Activated CD4-positive, alpha-beta T cell treated with anti-CD3 and anti-CD28 coated beads for 36 hours (primary cell): ENCODE measurements at regions of chr4 and their contacts with region 1.

Region 1: DNA sequence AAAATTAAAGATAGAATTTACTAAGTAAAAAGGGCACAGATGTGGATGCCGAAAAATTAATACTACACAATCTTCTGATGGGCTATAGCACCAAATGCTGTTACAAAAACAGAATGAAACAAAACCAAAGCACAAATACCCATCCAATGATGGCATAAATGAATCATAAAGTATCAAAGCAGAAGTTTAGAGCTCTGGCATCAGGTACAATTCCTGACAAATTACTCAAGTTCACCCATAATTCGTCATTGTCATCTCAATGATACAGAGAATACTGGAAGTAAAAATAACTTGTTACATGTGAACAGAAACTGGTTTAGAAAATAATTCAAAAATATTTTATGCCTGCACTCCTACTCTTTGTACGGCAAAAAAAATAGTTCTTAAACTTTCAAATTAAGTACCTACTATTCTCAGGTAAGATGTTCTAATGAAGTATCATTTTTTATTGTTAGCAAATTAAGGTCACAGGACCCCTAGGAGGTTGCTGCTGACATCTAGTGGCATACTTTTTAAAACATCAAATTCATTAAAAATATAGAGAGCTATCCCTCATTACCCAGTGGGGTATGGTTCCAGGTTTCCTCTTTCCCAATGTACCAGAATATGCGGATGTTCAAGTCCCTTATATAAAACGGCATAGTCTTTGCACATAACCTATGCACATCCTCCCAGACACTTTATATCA is 126.1 kb downstream of the INPP4B start:
- DNase-seq: no peak
- ATAC-seq: peak; percentile 70
- H3K4me3 Mint-ChIP-seq: no peak overlapping the region
- H3K27ac Mint-ChIP-seq: peak overlapping the region; percentile 47
- H3K4me1 Mint-ChIP-seq: peaks cover 34% of the 10 kb centered on the region
- H3K27me3 Mint-ChIP-seq: no peaks in the 10 kb centered on the region

Region 2: GRCh38 chr4:142126890-142127497 is 593.0 kb before region 1 on chr4:
- CTCF ChIA-PET with region 1: interaction called, 5 read pairs
- POLR2A ChIA-PET with region 1: no interaction called
- intact Hi-C with region 1: loop called (anchors 1 to 2 kb)
- DNase-seq: peak; percentile 75
- ATAC-seq: peak; percentile 74
- H3K4me3 Mint-ChIP-seq: no peak overlapping the region
- H3K27ac Mint-ChIP-seq: no peak overlapping the region
- H3K4me1 Mint-ChIP-seq: peaks cover 32% of the 10 kb centered on the region
- H3K27me3 Mint-ChIP-seq: no peaks in the 10 kb centered on the region

Region 3: DNA sequence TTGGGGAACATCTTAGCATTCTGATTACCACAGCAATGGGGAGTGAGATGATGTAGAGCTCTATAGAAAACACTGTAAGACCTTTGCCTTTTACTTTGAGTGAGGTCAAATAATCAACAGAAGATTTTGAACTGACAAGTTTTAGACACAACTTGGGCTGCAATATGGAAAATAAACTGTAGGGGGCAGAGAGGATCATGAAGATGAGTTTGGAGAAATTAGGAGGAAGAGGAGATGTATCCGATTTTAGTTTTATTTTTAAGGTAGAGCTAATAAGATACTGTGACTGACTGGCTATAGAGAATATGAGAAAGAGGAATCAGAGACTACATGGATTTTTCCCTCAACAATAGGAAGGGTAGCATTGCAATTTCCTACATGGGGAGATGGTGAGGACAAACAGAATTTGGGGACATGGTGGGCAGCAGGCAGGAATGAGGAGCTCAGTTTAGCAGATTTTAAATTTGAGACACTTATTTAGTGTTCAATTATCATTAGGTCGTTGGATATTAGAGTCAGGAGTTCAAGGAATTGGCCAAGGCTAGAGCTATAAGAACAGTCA is 437.0 kb before region 1 on chr4:
- CTCF ChIA-PET with region 1: interaction called, 3 read pairs
- POLR2A ChIA-PET with region 1: no interaction called
- intact Hi-C with region 1: loop called (anchors 5 kb)
- DNase-seq: no peak
- ATAC-seq: no peak
- H3K4me3 Mint-ChIP-seq: no peak overlapping the region
- H3K27ac Mint-ChIP-seq: no peak overlapping the region
- H3K4me1 Mint-ChIP-seq: peaks cover 23% of the 10 kb centered on the region
- H3K27me3 Mint-ChIP-seq: no peaks in the 10 kb centered on the region

Region 4: GRCh38 chr4:142824368-142824767 is 104.4 kb after region 1 on chr4:
- CTCF ChIA-PET with region 1: no interaction called
- POLR2A ChIA-PET with region 1: interaction called, 4 read pairs
- intact Hi-C with region 1: loop called in 1 of 2 experiments (anchors 5 kb)
- DNase-seq: no peak
- ATAC-seq: peak; percentile 96
- H3K4me3 Mint-ChIP-seq: peak overlapping the region; percentile 9
- H3K27ac Mint-ChIP-seq: peak overlapping the region; percentile 63
- H3K4me1 Mint-ChIP-seq: peaks cover 18% of the 10 kb centered on the region
- H3K27me3 Mint-ChIP-seq: no peaks in the 10 kb centered on the region

Region 5: GRCh38 chr4:142840516-142841123 is 120.6 kb after region 1 on chr4:
- CTCF ChIA-PET with region 1: interaction called, 6 read pairs
- POLR2A ChIA-PET with region 1: no interaction called
- intact Hi-C with region 1: loop called in 1 of 2 experiments (anchors 5 kb)
- DNase-seq: peak; percentile 8
- ATAC-seq: no peak
- H3K4me3 Mint-ChIP-seq: no peak overlapping the region
- H3K27ac Mint-ChIP-seq: no peak overlapping the region
- H3K4me1 Mint-ChIP-seq: peaks cover 31% of the 10 kb centered on the region
- H3K27me3 Mint-ChIP-seq: no peaks in the 10 kb centered on the region